BJ (cell line): ENCODE measurements at regions of chr11 and their contacts with region 1.

Region 1: DNA sequence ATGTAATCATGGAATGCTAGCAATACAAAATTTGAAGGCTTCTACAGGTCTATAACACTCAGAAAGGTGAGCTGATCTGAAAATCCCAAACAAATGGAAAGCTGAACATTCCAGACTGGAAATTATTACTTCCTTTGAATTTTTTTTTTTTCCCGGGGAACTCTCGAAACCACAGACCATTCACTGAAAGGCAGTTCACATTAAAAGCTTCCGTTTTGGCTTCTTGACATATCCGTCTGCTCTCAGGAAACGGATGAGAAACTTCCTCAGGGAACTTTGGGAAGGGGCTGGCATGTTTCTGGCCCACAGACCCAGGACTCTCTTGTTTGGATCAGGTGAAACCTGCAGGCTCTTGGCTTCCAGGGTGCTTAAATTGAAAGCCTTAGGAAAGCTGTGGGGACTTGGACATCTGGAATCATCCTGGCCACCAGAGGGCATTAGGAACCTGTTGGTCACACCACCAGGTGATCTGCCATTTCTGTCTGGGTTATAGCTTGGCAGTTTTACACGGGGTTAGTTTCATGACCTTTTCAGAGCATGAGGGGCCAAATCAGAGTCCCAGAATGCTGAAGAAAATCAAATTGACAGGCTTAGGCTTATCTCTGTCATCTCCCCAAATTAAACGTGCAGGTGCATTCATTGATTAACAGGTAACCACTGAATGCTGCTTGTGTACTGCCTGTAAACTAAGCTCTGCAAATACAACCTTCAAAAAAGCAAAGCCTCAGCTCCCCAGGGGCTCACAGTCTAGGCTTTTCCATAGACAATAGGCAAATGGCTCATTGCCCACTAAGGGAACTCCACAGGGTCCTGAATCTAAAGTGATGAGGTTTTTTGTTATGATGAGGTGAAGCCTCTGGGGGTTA is 22.7 kb upstream of the GRAMD1B start:
- DNase-seq: no peak
- H3K4me3 ChIP-seq: no peak overlapping the region
- H3K27me3 ChIP-seq: peaks cover 2% of the 10 kb centered on the region
- CTCF ChIP-seq: peak; percentile 82

Region 2: DNA sequence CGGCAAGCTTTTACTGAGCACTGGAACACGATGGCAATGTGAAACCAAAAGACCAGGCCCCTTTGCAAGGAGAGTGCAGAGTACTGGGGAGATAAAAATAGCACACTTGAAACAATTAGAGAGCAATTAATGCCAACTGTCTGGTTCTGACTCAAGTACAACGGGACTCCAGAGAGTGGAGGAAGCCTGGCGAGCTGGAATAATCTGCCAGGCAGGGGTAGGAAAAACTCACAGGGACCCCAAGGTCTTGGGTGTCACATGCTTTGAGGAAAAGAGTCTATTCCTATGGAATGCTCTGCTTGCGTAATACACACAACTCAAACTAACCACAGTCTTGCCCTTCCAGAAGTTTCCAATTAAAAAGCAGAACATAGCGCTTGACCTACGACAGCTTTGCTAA is 99.3 kb before region 1 on chr11:
- CTCF ChIA-PET with region 1: interaction called, 12 read pairs
- POLR2A ChIA-PET with region 1: no interaction called
- DNase-seq: peak; percentile 76
- H3K4me3 ChIP-seq: no peak overlapping the region
- H3K27me3 ChIP-seq: peaks cover 5% of the 10 kb centered on the region; the same call in 1 of the 2 replicates
- CTCF ChIP-seq: no peak

Region 3: DNA sequence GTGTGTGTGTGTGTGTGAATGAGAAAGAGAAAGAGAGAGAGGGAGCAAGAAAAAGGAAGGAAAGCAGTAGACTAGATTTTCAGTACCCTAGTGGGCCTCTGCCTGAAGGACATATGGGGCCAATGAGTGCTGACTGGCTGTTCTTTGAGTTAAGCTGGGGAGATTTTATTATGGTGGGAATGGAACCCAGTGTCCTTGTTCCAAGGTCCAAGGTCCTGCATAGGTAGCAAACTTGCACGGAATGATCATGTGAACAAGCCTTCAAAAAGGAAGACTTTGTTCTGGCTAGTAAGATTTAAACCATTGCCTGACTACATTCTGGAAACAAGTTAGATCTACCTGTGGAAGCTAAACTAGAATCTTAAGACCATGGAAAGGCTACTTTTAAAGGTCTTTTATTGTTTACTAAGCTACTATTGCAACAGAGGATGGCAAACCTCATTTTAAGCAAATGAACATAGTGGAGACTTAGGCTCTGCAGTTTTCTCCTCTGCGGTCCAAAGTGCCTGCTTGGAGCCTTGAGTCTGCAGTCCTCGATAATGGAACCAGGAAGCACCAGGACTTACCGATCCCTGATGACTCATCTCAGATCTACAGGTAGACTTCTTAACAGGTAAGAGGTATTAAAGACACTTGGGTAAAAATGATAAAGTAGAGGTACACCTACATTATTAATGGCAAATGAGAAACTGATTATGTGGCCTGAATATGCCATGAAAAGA is 12.5 kb after region 1 on chr11:
- CTCF ChIA-PET with region 1: interaction called, 35 read pairs
- POLR2A ChIA-PET with region 1: no interaction called
- DNase-seq: no peak
- H3K4me3 ChIP-seq: no peak overlapping the region
- H3K27me3 ChIP-seq: peaks cover 2% of the 10 kb centered on the region
- CTCF ChIP-seq: no peak

Region 4: DNA sequence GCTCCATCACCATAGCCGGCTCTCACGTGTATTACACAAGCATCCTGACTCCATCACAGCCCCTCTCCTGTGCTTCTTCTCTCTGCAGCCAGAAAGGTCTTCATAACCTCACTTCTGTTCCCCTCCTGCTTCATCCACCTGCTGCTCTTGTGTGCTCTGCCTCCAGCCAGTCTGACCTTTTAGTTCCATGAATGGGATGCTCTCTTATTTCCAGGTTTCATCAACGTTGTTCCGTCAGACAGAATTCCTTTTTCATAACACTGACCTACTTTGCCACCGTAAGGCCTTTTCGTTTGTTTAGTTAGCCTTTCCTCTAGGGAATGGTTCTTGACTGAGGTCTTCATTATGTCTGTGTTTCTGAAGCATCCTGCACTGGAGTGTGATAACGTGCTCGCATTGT is 41.5 kb after region 1 on chr11:
- CTCF ChIA-PET with region 1: no interaction called
- POLR2A ChIA-PET with region 1: no interaction called
- DNase-seq: no peak
- H3K4me3 ChIP-seq: no peak overlapping the region
- H3K27me3 ChIP-seq: no peaks in the 10 kb centered on the region
- CTCF ChIP-seq: no peak

Region 5: DNA sequence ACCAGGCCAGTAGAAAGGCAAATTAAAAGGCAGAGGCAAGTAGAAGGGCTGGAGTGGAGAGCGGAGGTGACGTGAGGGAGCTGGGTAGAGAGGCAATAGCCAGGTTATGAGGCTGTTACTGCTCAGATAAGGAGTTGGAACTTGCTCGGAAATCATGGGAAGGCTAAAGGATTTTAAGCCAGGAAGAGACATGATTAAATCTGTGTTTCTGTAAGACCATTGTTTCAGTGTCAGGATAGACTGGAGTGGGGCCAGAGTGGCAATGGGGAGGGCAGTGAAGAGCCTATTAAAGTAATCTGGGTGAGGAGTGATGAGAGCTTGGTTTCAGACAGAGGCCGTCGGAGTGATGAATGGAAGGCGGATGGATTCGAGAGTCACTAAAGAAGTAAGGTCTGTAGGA is 61.7 kb after region 1 on chr11:
- CTCF ChIA-PET with region 1: interaction called, 158 read pairs
- POLR2A ChIA-PET with region 1: no interaction called
- DNase-seq: no peak
- H3K4me3 ChIP-seq: no peak overlapping the region
- H3K27me3 ChIP-seq: no peaks in the 10 kb centered on the region
- CTCF ChIP-seq: no peak

Region 6: GRCh38 chr11:123484448-123484847 is 77.1 kb after region 1 on chr11:
- CTCF ChIA-PET with region 1: interaction called, 158 read pairs
- POLR2A ChIA-PET with region 1: no interaction called
- DNase-seq: no peak
- H3K4me3 ChIP-seq: no peak overlapping the region
- H3K27me3 ChIP-seq: no peaks in the 10 kb centered on the region
- CTCF ChIP-seq: no peak